ENCODE measurements at regions of chr11 and their contacts with region 1.

Region 1: DNA sequence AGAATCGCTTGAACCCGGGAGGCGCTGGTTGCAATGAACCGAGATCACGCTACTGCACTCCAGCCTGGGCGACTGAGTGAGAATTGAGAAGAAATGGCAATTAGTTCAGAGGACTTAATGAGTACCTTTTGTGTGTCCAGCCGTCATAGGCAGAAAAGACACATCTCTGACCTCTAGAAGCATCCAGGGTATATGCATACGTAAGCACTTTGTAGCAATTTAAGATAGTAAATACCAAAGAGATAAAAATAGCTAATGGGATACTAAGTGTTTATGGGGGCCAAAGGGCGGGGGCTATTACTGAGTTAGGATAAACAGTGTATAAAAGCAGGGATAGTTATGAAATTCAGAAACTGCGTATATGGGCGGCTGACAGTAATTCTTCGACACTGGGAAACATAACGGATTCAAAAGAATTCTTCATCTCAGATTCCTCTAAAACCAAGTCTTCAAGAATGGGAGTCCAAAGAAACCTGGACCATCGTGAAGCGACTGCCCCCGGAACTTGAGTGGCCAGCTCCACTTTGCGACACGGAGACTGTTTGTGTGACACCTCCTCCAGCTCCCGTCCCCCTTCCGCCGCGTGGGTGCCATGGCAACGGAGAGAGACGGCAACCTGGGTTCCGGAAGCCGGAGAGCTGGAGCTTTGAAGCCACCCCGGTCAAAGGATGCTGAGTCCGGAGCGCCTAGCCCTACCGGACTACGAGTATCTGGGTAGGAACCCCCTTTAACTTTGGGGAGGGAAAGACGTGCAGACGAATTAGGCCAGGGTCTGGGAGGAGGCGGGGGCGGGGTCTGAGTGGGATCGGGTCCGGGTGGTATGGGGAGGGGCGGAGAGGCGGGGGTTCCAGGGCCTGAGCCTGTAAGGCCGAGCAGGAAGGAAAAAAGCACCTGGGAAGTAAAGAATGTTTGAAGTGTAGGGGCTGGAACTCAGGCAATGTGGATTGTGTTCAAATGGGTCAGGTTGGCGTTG is at the start of gene CSTPP1:
- DNase-seq: peak; percentile 88
- ATAC-seq: peak; percentile 99
- H3K4me3 ChIP-seq: peak within 1 kb of the TSS; percentile 67 to 77 (median 74)
- H3K27ac ChIP-seq: peak within 1 kb of the TSS; percentile 50
- H3K4me1 ChIP-seq: peaks cover 11% of the 10 kb centered on the region
- H3K27me3 ChIP-seq: no peaks in the 10 kb centered on the region
- CTCF ChIP-seq: no peak
- EP300 ChIP-seq: no peak
- POLR2A ChIP-seq: 0 out of 4 replicates have a peak, but pooled peaks have one; percentile 21 to 41
- RAD21 ChIP-seq: 0 out of 2 replicates have a peak, but pooled peaks have one; percentile 42
- total RNA-seq, gene CSTPP1: 14.6 and 15.7 TPM in 2 replicates

Region 2: GRCh38 chr11:47124675-47125074 is 188.3 kb after region 1 on chr11:
- CTCF ChIA-PET with region 1: no interaction called
- POLR2A ChIA-PET with region 1: interaction called, 5 read pairs
- in situ Hi-C with region 1: no loop called
- intact Hi-C with region 1: loop called (anchors 2 kb)
- DNase-seq: no peak
- ATAC-seq: no peak
- H3K4me3 ChIP-seq: no peak overlapping the region
- H3K27ac ChIP-seq: no peak overlapping the region
- H3K4me1 ChIP-seq: peaks cover 6% of the 10 kb centered on the region
- H3K27me3 ChIP-seq: no peaks in the 10 kb centered on the region
- CTCF ChIP-seq: no peak
- EP300 ChIP-seq: no peak
- POLR2A ChIP-seq: no peak
- RAD21 ChIP-seq: no peak

Measured in HepG2 (cell line).